Endothelial cell of umbilical vein (primary cell): ENCODE measurements at regions of chr18 and their contacts with region 1.

Region 1: DNA sequence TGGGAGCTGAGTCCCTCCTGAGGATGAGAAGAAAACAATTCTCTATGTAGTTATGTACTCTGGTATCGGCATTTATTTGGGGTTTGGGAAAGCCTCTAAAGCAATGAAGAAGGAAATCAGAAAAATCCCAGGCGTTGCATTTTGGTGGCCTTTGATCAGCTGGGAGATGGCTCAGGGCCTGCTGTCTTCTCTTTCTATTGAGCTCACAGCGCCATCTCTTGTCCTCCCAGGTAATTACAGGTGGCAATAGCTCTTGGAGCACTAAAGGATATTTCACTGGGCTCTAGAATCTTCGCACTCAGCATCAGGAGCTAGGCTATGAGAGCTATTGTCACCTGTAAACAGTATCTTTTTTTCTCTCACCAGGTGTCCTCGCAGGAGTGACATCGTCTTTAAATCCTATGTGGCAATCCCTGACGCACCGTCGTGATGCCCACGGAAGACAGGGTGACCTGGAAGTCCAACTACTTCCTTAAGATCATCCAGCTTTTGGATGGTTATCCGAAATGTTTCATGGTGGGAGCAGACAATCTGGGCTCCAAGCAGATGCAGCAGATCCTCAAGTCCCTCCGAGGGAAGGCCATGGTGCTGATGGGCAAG is 76.1 kb upstream of the PMAIP1 start:
- DNase-seq: peak; percentile 51
- H3K4me3 ChIP-seq: no peak overlapping the region
- H3K27ac ChIP-seq: no peak overlapping the region
- H3K4me1 ChIP-seq: no peaks in the 10 kb centered on the region
- H3K27me3 ChIP-seq: no peaks in the 10 kb centered on the region
- CTCF ChIP-seq: peak; percentile 52 to 69
- POLR2A ChIP-seq: no peak

Region 2: GRCh38 chr18:59402432-59403090 is 421.1 kb before region 1 on chr18:
- CTCF ChIA-PET with region 1: interaction called, 27 read pairs
- POLR2A ChIA-PET with region 1: no interaction called
- dilution Hi-C with region 1: no loop called
- intact Hi-C with region 1: no loop called
- DNase-seq: peak; percentile 73
- H3K4me3 ChIP-seq: no peak overlapping the region
- H3K27ac ChIP-seq: no peak overlapping the region
- H3K4me1 ChIP-seq: no peaks in the 10 kb centered on the region
- H3K27me3 ChIP-seq: peaks cover 0 to 1% of the 10 kb centered on the region in 2 experiments
- CTCF ChIP-seq: peak; percentile 84 to 92
- POLR2A ChIP-seq: no peak

Region 3: DNA sequence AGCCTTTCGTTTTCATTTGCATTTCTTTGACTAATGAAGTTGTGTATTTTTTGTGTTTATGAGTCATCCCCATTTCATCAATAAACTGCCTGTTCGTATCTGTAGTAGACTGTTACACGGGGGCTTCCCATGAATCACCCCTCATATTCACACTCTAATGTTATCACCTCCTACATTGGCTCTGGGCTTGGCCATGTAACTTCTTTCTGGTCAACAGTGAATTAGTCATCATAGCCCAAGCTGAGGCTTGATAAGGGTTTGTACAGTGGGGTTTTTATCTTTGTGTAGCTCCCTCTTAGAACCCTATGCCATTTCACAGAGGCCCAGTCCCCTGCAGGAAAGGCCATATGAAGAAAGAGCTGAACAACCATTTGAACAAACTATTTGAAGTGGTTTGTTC is 277.5 kb before region 1 on chr18:
- CTCF ChIA-PET with region 1: no interaction called
- POLR2A ChIA-PET with region 1: no interaction called
- dilution Hi-C with region 1: no loop called
- intact Hi-C with region 1: no loop called
- DNase-seq: no peak
- H3K4me3 ChIP-seq: no peak overlapping the region
- H3K27ac ChIP-seq: no peak overlapping the region
- H3K4me1 ChIP-seq: no peaks in the 10 kb centered on the region
- H3K27me3 ChIP-seq: no peaks in the 10 kb centered on the region
- CTCF ChIP-seq: no peak
- POLR2A ChIP-seq: no peak

Region 4: GRCh38 chr18:59623456-59624368 is 200.0 kb before region 1 on chr18:
- CTCF ChIA-PET with region 1: interaction called, 37 read pairs
- POLR2A ChIA-PET with region 1: no interaction called
- dilution Hi-C with region 1: no loop called
- intact Hi-C with region 1: no loop called
- DNase-seq: no peak
- H3K4me3 ChIP-seq: no peak overlapping the region
- H3K27ac ChIP-seq: no peak overlapping the region
- H3K4me1 ChIP-seq: no peaks in the 10 kb centered on the region
- H3K27me3 ChIP-seq: peaks cover 0 to 1% of the 10 kb centered on the region in 2 experiments
- CTCF ChIP-seq: no peak
- POLR2A ChIP-seq: no peak

Region 5: GRCh38 chr18:59697236-59697932 is 126.3 kb before region 1 on chr18 and contains the start of gene CCBE1:
- CTCF ChIA-PET with region 1: interaction called, 246 read pairs
- POLR2A ChIA-PET with region 1: no interaction called
- dilution Hi-C with region 1: no loop called
- intact Hi-C with region 1: loop called (anchors 1 kb)
- DNase-seq: peak; percentile 34
- H3K4me3 ChIP-seq: peak within 1 kb of the TSS in 1 of 3 experiments; percentile 8
- H3K27ac ChIP-seq: no peak within 1 kb of the TSS
- H3K4me1 ChIP-seq: peaks cover 2% of the 10 kb centered on the region
- H3K27me3 ChIP-seq: peaks cover 29 to 35% of the 10 kb centered on the region in 2 experiments
- CTCF ChIP-seq: peak; percentile 72 to 91
- POLR2A ChIP-seq: no peak
- total RNA-seq, gene CCBE1: not detected in 2 replicates

Region 6: DNA sequence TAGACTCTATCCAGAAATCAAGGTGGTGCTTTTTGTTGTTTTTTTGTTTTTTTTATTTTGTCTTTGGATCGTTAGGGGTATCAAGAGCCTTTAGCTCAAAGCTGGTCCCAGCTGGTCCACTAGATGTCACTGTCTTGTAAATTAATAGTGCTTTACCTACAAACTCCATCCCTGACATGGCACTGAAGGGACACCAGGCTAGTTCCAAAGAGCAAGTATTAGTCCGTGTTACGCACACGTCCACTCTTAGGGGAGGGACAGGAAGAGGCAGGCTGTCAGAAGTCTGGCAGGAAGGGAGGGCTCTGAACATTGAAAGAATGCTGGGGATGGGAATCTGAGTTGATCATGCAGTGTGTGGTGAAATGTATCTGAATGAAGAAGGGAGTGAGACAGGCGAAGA is 40.6 kb before region 1 on chr18:
- CTCF ChIA-PET with region 1: interaction called, 134 read pairs
- POLR2A ChIA-PET with region 1: interaction called, 3 read pairs
- dilution Hi-C with region 1: no loop called
- intact Hi-C with region 1: loop called (anchors 2 kb)
- DNase-seq: peak; percentile 30
- H3K4me3 ChIP-seq: no peak overlapping the region
- H3K27ac ChIP-seq: no peak overlapping the region
- H3K4me1 ChIP-seq: no peaks in the 10 kb centered on the region
- H3K27me3 ChIP-seq: no peaks in the 10 kb centered on the region
- CTCF ChIP-seq: peak; percentile 41 to 47
- POLR2A ChIP-seq: no peak

Region 7: DNA sequence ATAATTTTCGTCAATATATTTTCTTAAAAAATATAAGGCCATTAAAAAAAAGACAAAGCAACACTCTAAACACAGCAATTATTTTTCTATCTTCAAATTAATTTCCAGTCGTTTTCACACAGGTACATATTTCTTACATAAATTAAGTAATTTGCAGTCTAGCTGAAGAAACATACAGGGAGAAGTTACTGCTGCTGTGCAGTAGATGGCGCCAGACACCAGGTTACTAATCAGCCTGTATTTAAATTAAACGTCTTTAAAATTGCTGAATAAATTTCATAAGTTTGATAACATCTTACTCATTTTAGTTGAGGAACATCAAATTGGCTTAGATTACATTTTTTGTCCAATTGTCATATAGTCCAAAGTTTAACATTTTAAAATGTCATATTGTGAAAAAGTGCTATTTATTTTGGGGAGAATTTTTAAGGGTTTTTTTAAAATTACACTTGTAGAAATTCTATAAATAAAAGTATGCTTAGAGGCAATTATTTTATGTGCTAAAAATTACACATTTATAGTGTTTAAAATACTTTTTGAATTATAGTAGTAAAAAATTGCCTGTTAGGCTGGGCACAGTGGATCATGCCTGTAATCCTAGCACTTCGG is 164.5 kb after region 1 on chr18:
- CTCF ChIA-PET with region 1: interaction called, 14 read pairs
- POLR2A ChIA-PET with region 1: no interaction called
- dilution Hi-C with region 1: loop called (anchors 25 kb)
- intact Hi-C with region 1: no loop called
- DNase-seq: peak; percentile 68
- H3K4me3 ChIP-seq: no peak overlapping the region
- H3K27ac ChIP-seq: no peak overlapping the region
- H3K4me1 ChIP-seq: no peaks in the 10 kb centered on the region
- H3K27me3 ChIP-seq: peaks cover 0 to 1% of the 10 kb centered on the region in 2 experiments
- CTCF ChIP-seq: peak; percentile 58 to 67
- POLR2A ChIP-seq: no peak